ENCODE measurements at regions of chr18 and their contacts with region 1.

Region 1: DNA sequence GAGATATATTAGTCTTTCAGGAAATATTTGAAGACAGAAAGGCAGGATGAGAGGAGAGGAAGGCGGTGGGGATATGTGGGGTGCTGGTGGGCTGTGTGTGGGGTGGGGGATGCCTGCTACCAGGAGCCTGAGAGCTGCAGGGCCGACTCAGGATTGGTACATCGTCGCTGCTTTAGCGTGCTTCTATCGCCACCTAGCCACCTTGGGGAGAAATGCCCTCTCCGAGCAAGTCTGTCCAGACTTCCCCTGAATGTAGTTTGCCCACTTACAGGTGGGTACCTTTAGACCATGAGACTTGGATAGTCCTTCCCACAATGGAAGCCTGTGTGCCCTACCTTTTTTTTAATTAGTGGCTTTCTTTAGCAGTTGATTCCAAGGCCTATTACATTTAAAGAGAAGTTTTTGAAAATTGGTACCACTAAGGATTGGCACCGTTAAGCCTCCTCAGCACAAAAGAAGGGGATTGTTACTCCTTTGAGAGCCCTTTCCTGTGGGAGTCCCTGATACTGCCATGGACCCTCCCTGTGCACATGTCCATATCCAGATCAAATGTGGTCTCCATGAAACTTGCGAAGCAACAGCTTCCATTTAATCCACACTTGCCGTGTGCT is 114.1 kb upstream of the NDUFV2 start:
- DNase-seq: peak; percentile 70
- H3K4me3 Mint-ChIP-seq: no peak overlapping the region
- H3K27ac Mint-ChIP-seq: no peak overlapping the region
- H3K4me1 Mint-ChIP-seq: peaks cover 23% of the 10 kb centered on the region
- H3K27me3 Mint-ChIP-seq: no peaks in the 10 kb centered on the region
- CTCF ChIP-seq: peak; percentile 92

Region 2: GRCh38 chr18:8478166-8478967 is 510.0 kb before region 1 on chr18:
- CTCF ChIA-PET with region 1: interaction called, 4 read pairs
- POLR2A ChIA-PET with region 1: no interaction called
- intact Hi-C with region 1: loop called (anchors 5 kb)
- DNase-seq: peak; percentile 64
- H3K4me3 Mint-ChIP-seq: no peak overlapping the region
- H3K27ac Mint-ChIP-seq: no peak overlapping the region
- H3K4me1 Mint-ChIP-seq: peaks cover 5% of the 10 kb centered on the region
- H3K27me3 Mint-ChIP-seq: peaks cover 45% of the 10 kb centered on the region
- CTCF ChIP-seq: peak; percentile 76

Region 3: DNA sequence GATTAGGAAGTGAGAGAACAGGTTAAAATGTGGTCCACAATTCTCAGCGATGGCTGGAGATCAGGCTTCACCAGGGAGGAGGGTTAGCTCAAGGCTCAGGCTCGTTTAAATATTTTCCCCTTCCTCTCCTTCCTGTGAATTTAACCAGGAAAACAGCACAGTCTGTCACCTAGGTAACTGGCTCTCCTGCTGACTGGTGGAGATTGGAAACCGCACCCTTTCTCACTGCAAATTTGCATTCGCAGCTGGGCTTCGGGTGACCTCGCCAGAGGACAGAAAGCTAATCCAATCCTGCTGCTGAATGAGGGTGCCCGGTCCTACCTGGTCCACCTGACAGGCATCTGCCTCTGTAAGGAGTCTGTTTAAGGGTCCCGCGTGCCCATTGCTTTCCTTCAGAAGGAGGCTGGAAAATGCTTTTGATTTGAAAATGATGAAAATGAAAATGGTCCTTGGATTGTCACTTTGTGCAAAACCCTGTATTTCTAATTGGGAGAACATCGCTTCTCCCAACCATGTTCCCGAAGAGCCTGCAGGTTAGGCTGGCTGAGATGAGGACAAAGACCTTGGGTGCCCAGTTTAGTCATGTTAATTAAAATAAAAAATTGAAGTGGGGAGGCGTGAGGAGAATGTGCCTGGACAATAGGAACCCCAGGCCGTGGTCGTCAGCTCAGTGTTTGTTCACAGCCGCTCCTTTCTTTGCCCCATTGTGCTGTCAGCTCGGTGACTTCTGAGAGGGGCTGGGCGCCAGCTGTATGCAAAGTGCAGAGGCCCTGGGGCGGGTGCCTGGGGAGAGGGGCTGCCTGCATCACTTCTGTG is 326.4 kb before region 1 on chr18:
- CTCF ChIA-PET with region 1: interaction called, 94 read pairs
- POLR2A ChIA-PET with region 1: interaction called, 3 read pairs
- intact Hi-C with region 1: no loop called
- DNase-seq: no peak
- H3K4me3 Mint-ChIP-seq: no peak overlapping the region
- H3K27ac Mint-ChIP-seq: no peak overlapping the region
- H3K4me1 Mint-ChIP-seq: peaks cover 19% of the 10 kb centered on the region
- H3K27me3 Mint-ChIP-seq: no peaks in the 10 kb centered on the region
- CTCF ChIP-seq: no peak

Region 4: GRCh38 chr18:8685141-8685913 is 303.0 kb before region 1 on chr18:
- CTCF ChIA-PET with region 1: interaction called, 38 read pairs
- POLR2A ChIA-PET with region 1: interaction called, 10 read pairs
- intact Hi-C with region 1: no loop called
- DNase-seq: peak; percentile 85
- H3K4me3 Mint-ChIP-seq: peak overlapping the region; percentile 54
- H3K27ac Mint-ChIP-seq: peak overlapping the region; percentile 92
- H3K4me1 Mint-ChIP-seq: peaks cover 9% of the 10 kb centered on the region
- H3K27me3 Mint-ChIP-seq: no peaks in the 10 kb centered on the region
- CTCF ChIP-seq: no peak

Region 5: DNA sequence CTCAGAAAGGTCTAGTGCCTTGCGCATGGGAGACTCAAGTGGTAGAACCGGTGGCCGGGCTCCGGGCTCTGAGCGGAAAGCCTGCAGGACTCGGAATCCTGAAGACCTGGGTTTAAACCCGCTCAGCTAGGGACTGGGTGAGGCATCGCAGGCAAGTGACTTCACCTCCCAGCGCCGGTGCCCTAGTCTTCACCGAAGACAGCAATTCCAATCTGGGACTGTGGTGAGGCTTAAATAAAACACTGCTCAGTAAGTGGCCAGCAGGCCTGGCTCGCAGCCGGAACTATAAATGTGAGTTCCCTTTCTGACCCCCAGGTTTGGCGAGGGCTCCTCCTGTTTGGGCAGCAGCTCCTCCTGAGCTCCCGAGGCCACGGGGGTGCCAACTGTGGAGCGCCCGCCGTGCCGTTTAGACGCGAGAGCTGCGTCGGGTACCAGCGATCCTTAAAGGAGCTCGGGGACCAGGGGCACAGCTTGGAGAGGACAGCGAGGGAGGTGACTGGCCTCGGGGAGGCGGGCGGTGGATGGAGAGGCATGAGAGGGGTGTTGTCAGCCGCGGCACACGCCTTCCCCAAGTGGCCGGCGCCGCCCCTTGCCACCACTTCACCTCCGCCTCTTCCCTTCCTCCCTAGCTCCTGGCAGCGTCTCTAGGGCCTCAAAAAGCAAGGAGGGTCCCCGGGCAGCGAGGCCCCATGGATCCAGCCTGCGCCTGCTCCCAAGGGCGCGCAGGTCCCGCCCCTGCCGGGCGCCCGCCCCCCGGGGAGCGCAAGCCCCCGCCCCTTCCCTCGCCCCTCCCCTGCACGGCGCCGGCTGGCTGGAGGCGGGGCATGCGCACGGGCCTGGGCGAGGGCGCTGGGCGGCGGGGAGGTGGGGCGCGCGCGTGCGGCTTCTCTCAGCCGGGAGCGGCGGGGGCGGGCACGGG is 283.7 kb before region 1 on chr18:
- CTCF ChIA-PET with region 1: interaction called, 35 read pairs
- POLR2A ChIA-PET with region 1: interaction called, 12 read pairs
- intact Hi-C with region 1: no loop called
- DNase-seq: peak; percentile 87
- H3K4me3 Mint-ChIP-seq: peak overlapping the region; percentile 90
- H3K27ac Mint-ChIP-seq: no peak overlapping the region
- H3K4me1 Mint-ChIP-seq: peaks cover 27% of the 10 kb centered on the region
- H3K27me3 Mint-ChIP-seq: no peaks in the 10 kb centered on the region
- CTCF ChIP-seq: no peak

Region 6: GRCh38 chr18:9055185-9055584 is 66.8 kb after region 1 on chr18:
- CTCF ChIA-PET with region 1: interaction called, 5 read pairs
- POLR2A ChIA-PET with region 1: interaction called, 13 read pairs
- intact Hi-C with region 1: loop called (anchors 2 kb)
- DNase-seq: peak; percentile 90
- H3K4me3 Mint-ChIP-seq: peak overlapping the region; percentile 31
- H3K27ac Mint-ChIP-seq: peak overlapping the region; percentile 89
- H3K4me1 Mint-ChIP-seq: peaks cover 16% of the 10 kb centered on the region
- H3K27me3 Mint-ChIP-seq: no peaks in the 10 kb centered on the region
- CTCF ChIP-seq: no peak

Region 7: DNA sequence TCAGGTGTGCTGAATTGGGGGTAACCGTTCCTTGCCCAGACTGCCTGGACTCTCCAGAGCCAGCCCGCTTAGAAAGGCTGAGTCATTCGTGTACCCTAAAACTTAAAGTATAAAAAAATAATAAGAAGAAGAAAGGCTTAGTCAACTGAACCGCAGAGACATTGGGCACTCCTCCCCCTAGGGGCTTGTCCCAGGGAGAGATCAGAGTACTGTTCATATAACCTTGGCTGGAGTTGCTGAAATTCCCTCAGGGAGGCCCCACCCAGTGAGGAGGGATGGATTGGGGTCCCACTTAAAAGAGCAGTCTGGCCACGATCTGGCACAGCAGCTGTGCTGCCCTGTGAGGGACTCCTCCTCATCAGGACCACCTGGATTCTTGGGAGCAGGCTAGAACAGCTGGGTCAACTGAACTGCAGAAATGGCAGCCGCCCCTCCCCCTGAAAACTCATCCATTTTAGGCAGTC is 185.4 kb after region 1 on chr18:
- CTCF ChIA-PET with region 1: no interaction called
- POLR2A ChIA-PET with region 1: no interaction called
- intact Hi-C with region 1: no loop called
- DNase-seq: no peak
- H3K4me3 Mint-ChIP-seq: no peak overlapping the region
- H3K27ac Mint-ChIP-seq: no peak overlapping the region
- H3K4me1 Mint-ChIP-seq: peaks cover 11% of the 10 kb centered on the region
- H3K27me3 Mint-ChIP-seq: no peaks in the 10 kb centered on the region
- CTCF ChIP-seq: no peak